ENCODE measurements at regions of chr9 and their contacts with region 1.

Region 1: GRCh38 chr9:101311758-101312420 is 72.9 kb downstream of the BAAT start:
- DNase-seq: peak; percentile 70
- H3K27ac ChIP-seq: no peak overlapping the region
- CTCF ChIP-seq: peak; percentile 84

Region 2: DNA sequence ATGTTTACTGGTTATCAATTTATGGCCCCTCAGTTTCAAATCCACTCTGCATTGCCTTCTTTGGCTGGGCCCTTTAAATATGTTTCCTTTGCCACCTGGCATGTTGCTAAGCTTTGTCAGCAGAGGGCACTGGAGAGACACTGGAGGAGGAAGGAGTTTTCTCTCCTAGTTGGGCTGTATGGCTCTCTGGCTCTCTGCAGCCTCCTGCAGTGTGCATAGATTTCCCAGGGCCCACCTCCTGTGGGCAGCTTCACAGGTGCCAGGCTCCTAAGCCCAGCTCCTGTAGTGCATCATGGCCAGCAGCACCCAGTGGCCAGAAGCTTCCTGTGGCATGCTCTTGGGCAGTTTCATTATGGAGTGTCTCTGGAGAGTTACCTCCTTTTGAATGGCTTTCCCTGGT is 710.7 kb before region 1 on chr9:
- CTCF ChIA-PET with region 1: interaction called, 42 read pairs
- POLR2A ChIA-PET with region 1: interaction called, 3 read pairs
- DNase-seq: peak; percentile 62
- H3K27ac ChIP-seq: no peak overlapping the region
- CTCF ChIP-seq: peak; percentile 85

Region 3: GRCh38 chr9:101119206-101119819 is 192.6 kb before region 1 on chr9:
- CTCF ChIA-PET with region 1: interaction called, 15 read pairs
- POLR2A ChIA-PET with region 1: no interaction called
- DNase-seq: peak; percentile 57
- H3K27ac ChIP-seq: no peak overlapping the region
- CTCF ChIP-seq: peak; percentile 80

Region 4: GRCh38 chr9:101326501-101326900 is 14.6 kb after region 1 on chr9:
- CTCF ChIA-PET with region 1: interaction called, 11 read pairs
- POLR2A ChIA-PET with region 1: no interaction called
- DNase-seq: no peak
- H3K27ac ChIP-seq: no peak overlapping the region
- CTCF ChIP-seq: no peak

Measured in RWPE1 (cell line).